Activated CD4-positive, alpha-beta memory T cell treated with anti-CD3 and anti-CD28 coated beads for 36 hours (primary cell): ENCODE measurements at regions of chr11 and their contacts with region 1.

Region 1: DNA sequence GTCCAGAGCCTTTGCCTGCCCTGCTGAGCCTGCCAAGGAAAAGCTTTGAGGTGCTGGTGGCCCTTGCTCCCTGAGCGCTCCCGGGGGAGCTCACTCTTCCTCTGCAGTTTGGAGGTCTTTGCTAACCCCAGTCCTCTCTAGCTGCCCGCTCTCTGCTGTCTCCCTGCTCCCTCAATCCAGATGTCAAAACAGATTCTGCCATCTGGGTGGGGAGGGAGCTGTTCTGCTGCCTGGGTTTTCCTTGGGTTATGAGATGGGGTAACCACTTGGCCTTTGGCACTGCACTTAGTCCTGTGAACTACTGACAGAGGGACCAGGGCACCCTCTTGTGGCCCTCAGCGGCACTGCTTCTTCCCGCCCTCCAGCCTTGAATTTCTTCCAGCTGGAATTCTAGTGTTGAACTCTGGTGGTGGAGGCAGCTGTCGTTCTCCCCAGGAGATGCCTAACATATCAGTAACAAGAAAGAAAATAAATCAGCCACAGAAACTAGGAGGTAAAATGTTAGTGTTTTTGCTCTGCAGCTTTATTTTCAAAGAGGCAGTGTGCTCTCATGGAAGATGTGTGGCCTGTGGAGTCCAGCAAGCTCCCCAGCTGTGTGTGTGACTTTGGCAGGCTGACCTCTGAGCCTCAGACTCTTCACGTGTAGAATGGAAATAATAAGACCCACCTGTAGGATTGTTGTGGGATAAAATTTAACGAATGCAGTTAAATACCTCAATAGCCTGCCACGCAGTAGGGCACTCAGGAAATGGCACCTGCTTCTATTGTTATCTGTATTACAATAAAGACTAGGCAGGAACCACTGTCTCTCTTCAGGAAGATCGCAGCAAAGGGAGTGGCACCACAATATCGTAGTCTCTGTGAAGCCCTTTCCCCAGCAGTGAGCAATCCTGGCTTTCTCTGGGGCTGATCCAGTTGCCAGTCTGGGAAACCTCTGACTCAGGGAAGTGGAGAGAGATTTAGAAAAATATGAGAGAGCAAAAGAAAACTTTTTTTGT is 23.4 kb downstream of the ARFGAP2 start:
- DNase-seq: peak; percentile 73
- H3K4me3 Mint-ChIP-seq: no peak overlapping the region
- H3K27ac Mint-ChIP-seq: no peak overlapping the region
- H3K4me1 Mint-ChIP-seq: peaks cover 26% of the 10 kb centered on the region
- H3K27me3 Mint-ChIP-seq: no peaks in the 10 kb centered on the region

Region 2: DNA sequence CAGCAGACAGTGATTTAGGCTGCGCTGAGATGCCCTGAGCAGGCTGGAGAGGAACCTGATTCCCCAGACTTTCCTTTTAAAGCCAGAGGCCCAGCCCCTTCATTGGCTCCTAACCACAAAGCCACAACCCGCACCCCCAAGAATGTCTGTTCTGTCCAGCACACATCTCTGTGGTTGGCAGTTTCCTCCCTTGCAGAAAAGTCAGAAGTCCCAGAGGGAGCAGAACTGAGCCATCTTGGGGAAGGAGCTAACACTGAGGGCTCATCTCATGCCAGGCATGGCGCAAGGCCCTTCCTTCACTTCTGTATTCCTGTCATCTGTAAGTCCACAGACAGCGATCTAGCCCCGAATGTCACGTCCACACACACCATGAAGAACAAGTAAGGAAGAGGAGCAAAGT is 1770.0 kb before region 1 on chr11:
- CTCF ChIA-PET with region 1: no interaction called
- POLR2A ChIA-PET with region 1: no interaction called
- intact Hi-C with region 1: no loop called
- DNase-seq: peak; percentile 21
- H3K4me3 Mint-ChIP-seq: no peak overlapping the region
- H3K27ac Mint-ChIP-seq: no peak overlapping the region
- H3K4me1 Mint-ChIP-seq: peaks cover 25% of the 10 kb centered on the region
- H3K27me3 Mint-ChIP-seq: no peaks in the 10 kb centered on the region

Region 3: DNA sequence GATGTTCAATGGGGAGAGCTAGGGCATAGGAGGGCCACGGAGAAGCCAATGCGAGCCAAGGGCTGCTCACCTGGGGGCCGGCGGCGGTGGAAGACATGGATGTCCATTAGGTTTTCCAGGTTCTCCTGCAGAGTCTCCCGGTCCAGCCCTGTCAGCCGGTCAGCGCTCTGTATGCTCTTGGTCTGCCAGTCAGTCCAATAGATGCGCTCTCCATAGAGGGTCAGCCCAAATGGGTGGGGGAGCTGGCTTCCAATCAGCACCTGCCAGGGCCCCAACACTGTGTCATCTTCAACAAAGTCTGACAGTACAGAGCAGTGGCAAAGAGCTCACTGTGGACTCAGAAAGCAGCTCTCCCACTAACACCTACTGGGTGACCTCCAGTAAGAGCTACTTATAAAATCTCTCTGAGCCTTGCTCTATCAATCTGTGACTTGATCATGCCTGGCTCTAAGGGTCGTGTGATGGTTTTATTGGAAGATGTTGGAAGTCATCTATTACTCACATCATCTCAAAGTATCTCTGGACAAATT is 274.1 kb before region 1 on chr11:
- CTCF ChIA-PET with region 1: interaction called, 17 read pairs
- POLR2A ChIA-PET with region 1: no interaction called
- intact Hi-C with region 1: no loop called
- DNase-seq: no peak
- H3K4me3 Mint-ChIP-seq: no peak overlapping the region
- H3K27ac Mint-ChIP-seq: no peak overlapping the region
- H3K4me1 Mint-ChIP-seq: no peaks in the 10 kb centered on the region
- H3K27me3 Mint-ChIP-seq: peaks cover 4% of the 10 kb centered on the region

Region 4: GRCh38 chr11:46889689-46890475 is 263.4 kb before region 1 on chr11:
- CTCF ChIA-PET with region 1: interaction called, 44 read pairs
- POLR2A ChIA-PET with region 1: no interaction called
- intact Hi-C with region 1: loop called (anchors 1 kb)
- DNase-seq: peak; percentile 78
- H3K4me3 Mint-ChIP-seq: no peak overlapping the region
- H3K27ac Mint-ChIP-seq: no peak overlapping the region
- H3K4me1 Mint-ChIP-seq: no peaks in the 10 kb centered on the region
- H3K27me3 Mint-ChIP-seq: peaks cover 3% of the 10 kb centered on the region

Region 5: DNA sequence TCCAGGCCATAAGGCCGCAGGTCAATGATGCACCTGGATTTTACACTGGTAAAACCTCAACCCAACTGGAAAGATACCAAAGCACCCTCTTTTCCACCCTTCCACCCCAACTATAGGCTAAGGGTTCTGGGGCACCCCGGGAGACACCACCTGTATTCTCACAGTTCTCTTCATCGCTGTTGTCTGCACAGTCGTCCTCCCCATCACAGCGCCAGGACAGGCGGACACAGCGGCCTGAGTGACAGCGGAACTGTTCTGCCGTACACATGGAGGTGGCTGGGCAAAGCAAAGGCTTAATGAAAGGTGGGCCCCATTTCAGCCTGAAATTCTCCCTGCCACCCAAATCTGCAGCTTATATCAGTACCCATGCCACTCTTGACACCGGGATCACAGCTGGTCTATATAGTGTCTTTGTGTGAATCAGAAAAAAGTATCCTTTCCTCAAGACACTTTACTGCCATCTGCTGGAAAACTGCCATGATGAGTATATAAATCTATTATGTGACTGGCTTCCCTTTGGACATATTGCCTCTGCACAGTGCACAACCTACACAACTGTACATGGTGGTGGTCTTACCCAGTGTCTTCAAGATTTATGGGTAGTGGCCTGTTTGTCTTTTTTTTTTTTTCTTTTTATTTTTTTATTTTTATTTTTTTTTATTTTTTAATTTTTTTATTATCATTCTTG is 256.4 kb before region 1 on chr11:
- CTCF ChIA-PET with region 1: interaction called, 26 read pairs
- POLR2A ChIA-PET with region 1: no interaction called
- intact Hi-C with region 1: no loop called
- DNase-seq: no peak
- H3K4me3 Mint-ChIP-seq: no peak overlapping the region
- H3K27ac Mint-ChIP-seq: no peak overlapping the region
- H3K4me1 Mint-ChIP-seq: no peaks in the 10 kb centered on the region
- H3K27me3 Mint-ChIP-seq: no peaks in the 10 kb centered on the region

Region 6: DNA sequence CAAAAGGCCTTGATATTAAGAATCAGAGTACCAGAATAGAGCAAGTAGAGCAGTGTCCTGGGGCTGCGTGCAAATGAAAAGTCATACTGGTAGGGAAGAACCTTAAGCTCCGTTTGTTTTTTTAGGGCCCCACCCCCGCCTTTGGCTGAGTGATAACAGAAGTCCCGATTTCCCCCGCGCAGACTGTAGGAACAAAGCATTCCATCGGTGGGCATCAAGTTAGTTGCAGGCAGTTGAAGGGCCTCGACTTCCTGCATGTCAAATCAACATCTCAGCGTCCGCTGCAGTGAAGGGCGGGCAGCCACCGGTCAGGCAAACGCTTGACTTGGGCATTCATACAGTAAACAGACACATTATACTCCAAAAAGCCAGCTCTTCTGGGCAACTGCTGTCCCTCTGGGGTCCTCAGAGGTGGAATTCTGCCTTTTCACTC is 246.6 kb before region 1 on chr11:
- CTCF ChIA-PET with region 1: interaction called, 21 read pairs
- POLR2A ChIA-PET with region 1: no interaction called
- intact Hi-C with region 1: no loop called
- DNase-seq: peak; percentile 34
- H3K4me3 Mint-ChIP-seq: no peak overlapping the region
- H3K27ac Mint-ChIP-seq: no peak overlapping the region
- H3K4me1 Mint-ChIP-seq: no peaks in the 10 kb centered on the region
- H3K27me3 Mint-ChIP-seq: peaks cover 7% of the 10 kb centered on the region

Region 7: GRCh38 chr11:46916286-46917108 is 236.8 kb before region 1 on chr11:
- CTCF ChIA-PET with region 1: interaction called, 34 read pairs
- POLR2A ChIA-PET with region 1: interaction called, 3 read pairs
- intact Hi-C with region 1: loop called (anchors 1 kb)
- DNase-seq: peak; percentile 30
- H3K4me3 Mint-ChIP-seq: peak overlapping the region; percentile 67
- H3K27ac Mint-ChIP-seq: peak overlapping the region; percentile 21
- H3K4me1 Mint-ChIP-seq: peaks cover 25% of the 10 kb centered on the region
- H3K27me3 Mint-ChIP-seq: peaks cover 60% of the 10 kb centered on the region

Region 8: GRCh38 chr11:47121056-47121455 is 32.2 kb before region 1 on chr11:
- CTCF ChIA-PET with region 1: no interaction called
- POLR2A ChIA-PET with region 1: no interaction called
- intact Hi-C with region 1: no loop called
- DNase-seq: no peak
- H3K4me3 Mint-ChIP-seq: no peak overlapping the region
- H3K27ac Mint-ChIP-seq: no peak overlapping the region
- H3K4me1 Mint-ChIP-seq: no peaks in the 10 kb centered on the region
- H3K27me3 Mint-ChIP-seq: no peaks in the 10 kb centered on the region

Region 9: GRCh38 chr11:47216121-47216798 is 63.0 kb after region 1 on chr11:
- CTCF ChIA-PET with region 1: no interaction called
- POLR2A ChIA-PET with region 1: no interaction called
- intact Hi-C with region 1: no loop called
- DNase-seq: peak; percentile 82
- H3K4me3 Mint-ChIP-seq: peak overlapping the region; percentile 97
- H3K27ac Mint-ChIP-seq: peak overlapping the region; percentile 99
- H3K4me1 Mint-ChIP-seq: peaks cover 37% of the 10 kb centered on the region
- H3K27me3 Mint-ChIP-seq: no peaks in the 10 kb centered on the region